ENCODE measurements at regions of chr22 and their contacts with region 1.

Region 1: GRCh38 chr22:19419464-19420178 is 11.9 kb downstream of the HIRA start:
- DNase-seq: peak in 1 of 2 experiments; percentile 15
- H3K4me3 ChIP-seq: no peak overlapping the region
- H3K4me1 ChIP-seq: peaks cover 3% of the 10 kb centered on the region; the same call in 1 of the 2 replicates
- H3K27me3 ChIP-seq: no peaks in the 10 kb centered on the region

Region 2: DNA sequence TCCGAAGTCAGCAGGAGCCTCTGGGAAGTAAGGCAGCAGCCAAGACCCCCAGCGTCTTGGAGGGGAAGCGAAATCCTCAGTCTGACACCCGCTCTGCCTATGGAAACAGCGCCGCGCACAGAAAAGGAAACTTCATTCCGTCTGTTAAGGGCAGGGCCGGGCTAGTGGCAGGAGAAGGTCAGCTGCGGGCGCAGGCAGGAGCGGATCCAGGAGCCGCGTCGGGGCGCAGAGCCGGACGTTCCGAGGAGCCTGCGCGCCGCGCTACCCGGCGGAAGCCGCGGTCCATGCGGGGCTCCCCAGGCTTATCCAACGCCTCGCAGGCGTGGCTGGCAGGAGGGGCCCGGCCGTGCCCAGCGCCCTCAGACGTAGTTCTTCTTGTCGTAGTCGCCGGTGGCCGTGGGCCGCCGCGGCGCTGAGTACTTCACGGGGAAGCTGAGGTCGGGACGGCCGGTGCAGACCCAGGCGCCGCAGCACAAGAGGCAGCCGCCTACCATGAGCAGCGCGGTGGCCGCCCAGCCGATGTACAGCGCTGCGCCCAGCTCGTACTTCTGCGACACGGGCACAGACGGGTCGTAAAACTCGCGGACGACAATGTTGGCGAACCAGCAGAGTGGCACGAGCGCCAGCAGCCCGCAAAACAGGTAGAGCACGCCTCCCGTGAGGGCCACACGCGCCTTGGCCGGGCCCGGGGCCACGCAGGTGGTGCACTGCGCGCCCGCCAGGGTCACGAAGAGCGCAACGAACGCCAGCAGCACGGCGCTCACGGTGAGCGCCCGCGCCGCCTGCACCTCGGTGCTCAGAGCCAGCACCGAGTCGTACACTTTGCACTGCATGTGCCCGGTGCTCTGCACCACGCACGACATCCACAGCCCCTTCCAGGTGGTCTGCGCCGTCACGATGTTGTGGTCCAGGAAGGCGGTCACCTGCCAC is 103.9 kb after region 1 on chr22:
- in situ Hi-C with region 1: loop called (anchors 25 kb)
- DNase-seq: no peak
- H3K4me3 ChIP-seq: no peak overlapping the region
- H3K4me1 ChIP-seq: peaks cover 6% of the 10 kb centered on the region
- H3K27me3 ChIP-seq: no peaks in the 10 kb centered on the region